OCI-LY7 (cell line): ENCODE measurements at regions of chr1 and their contacts with region 1.

Region 1: GRCh38 chr1:33295450-33296081 is 25.3 kb downstream of the A3GALT2 start:
- DNase-seq: peak; percentile 77
- H3K4me3 ChIP-seq: no peak overlapping the region
- H3K27ac ChIP-seq: no peak overlapping the region
- H3K4me1 ChIP-seq: no peaks in the 10 kb centered on the region
- CTCF ChIP-seq: peak; percentile 92

Region 2: GRCh38 chr1:33111970-33112369 is 183.6 kb before region 1 on chr1:
- CTCF ChIA-PET with region 1: no interaction called
- POLR2A ChIA-PET with region 1: no interaction called
- intact Hi-C with region 1: loop called (anchors 5 kb)
- DNase-seq: peak; percentile 43
- H3K4me3 ChIP-seq: no peak overlapping the region
- H3K27ac ChIP-seq: no peak overlapping the region
- H3K4me1 ChIP-seq: no peaks in the 10 kb centered on the region
- CTCF ChIP-seq: peak; percentile 75

Region 3: DNA sequence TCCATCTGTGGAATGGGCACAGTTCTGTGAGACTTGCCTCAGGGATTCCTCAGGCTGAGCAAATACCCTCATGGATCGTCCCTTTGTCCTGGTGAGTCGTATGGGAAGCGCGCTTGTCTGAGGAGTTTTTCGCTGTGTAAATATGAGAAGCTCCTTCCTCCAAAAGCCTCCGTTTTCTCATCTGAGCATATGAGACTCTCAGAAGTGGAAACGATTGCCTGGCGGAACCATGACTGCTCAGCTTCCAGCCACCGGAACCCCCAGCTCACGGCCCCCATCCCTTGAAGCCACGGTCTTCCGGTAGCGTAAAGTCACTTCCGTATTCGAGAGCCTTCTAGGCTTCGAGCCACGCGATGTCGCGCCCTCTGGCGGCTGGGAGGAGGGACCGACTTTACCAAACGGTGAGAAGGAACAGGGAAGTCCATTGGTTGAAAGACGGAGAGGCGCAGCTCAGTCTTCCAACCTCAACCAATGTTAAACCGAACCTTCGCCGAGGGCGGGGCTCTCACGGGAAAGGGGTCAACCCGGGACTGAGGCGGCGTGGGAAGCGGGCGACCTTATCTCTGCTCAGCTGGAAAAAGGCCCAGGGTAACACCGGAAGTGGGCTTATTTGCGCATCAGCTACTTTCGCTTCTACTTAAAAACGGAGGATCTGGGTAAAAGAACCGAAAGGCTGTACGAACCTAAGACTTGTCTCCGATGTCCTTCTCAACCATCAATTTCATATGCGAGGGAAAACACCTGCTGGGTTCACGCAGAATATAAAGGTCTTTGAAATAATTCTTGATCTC is 168.4 kb before region 1 on chr1:
- CTCF ChIA-PET with region 1: no interaction called
- POLR2A ChIA-PET with region 1: no interaction called
- intact Hi-C with region 1: loop called (anchors 5 kb)
- DNase-seq: peak; percentile 98
- H3K4me3 ChIP-seq: peak overlapping the region; percentile 76
- H3K27ac ChIP-seq: peak overlapping the region; percentile 90
- H3K4me1 ChIP-seq: peaks cover 24% of the 10 kb centered on the region
- CTCF ChIP-seq: peak; percentile 96

Region 4: DNA sequence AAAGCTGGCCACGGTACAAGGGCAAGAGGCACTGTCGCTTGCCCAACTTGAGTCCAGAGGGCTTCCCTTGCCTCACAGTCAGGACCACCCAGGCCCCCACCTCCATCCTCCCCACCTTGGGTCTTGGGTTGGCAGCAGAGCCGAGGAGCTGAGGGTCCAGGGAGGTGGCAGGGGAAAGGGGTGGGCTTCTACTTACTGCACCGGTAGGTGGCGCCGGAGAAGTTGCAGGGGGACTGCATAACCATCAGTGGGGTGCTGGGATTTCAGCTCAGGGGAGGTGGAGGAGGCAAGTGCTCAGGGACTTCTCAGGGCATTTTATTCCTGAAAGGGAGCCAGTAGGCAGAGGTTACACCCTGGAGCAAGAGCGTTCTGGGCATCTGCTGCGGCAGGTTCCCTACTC is 157.8 kb before region 1 on chr1:
- CTCF ChIA-PET with region 1: interaction called, 4 read pairs
- POLR2A ChIA-PET with region 1: no interaction called
- intact Hi-C with region 1: loop called (anchors 1 kb)
- DNase-seq: peak; percentile 65
- H3K4me3 ChIP-seq: no peak overlapping the region
- H3K27ac ChIP-seq: no peak overlapping the region
- H3K4me1 ChIP-seq: no peaks in the 10 kb centered on the region
- CTCF ChIP-seq: peak; percentile 86

Region 5: DNA sequence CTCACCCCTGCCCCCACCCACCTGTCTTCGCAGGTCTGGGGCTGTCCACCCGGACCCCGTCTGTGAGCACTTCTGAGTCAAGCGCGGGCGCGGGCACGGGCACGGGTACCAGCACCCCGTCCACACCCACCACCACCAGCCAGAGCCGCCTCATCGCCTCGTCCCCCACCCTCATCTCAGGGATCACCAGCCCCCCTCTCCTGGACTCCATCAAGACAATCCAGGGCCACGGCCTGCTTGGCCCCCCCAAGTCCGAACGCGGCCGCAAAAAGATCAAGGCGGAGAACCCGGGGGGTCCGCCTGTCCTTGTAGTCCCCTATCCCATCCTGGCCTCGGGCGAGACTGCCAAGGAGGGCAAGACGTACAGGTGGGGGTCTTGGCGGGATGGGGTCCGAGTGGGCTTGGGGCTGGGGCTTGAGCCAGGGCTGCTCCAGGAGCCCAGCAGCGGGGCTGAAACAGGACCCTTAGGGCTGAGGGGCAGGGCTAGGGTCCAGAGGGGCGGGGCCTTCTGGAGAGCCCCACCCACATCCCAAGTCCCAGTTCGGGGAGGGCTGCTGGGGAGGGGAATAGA is 15.4 kb before region 1 on chr1:
- CTCF ChIA-PET with region 1: no interaction called
- POLR2A ChIA-PET with region 1: no interaction called
- intact Hi-C with region 1: no loop called
- DNase-seq: no peak
- H3K4me3 ChIP-seq: no peak overlapping the region
- H3K27ac ChIP-seq: no peak overlapping the region
- H3K4me1 ChIP-seq: no peaks in the 10 kb centered on the region
- CTCF ChIP-seq: no peak

Region 6: DNA sequence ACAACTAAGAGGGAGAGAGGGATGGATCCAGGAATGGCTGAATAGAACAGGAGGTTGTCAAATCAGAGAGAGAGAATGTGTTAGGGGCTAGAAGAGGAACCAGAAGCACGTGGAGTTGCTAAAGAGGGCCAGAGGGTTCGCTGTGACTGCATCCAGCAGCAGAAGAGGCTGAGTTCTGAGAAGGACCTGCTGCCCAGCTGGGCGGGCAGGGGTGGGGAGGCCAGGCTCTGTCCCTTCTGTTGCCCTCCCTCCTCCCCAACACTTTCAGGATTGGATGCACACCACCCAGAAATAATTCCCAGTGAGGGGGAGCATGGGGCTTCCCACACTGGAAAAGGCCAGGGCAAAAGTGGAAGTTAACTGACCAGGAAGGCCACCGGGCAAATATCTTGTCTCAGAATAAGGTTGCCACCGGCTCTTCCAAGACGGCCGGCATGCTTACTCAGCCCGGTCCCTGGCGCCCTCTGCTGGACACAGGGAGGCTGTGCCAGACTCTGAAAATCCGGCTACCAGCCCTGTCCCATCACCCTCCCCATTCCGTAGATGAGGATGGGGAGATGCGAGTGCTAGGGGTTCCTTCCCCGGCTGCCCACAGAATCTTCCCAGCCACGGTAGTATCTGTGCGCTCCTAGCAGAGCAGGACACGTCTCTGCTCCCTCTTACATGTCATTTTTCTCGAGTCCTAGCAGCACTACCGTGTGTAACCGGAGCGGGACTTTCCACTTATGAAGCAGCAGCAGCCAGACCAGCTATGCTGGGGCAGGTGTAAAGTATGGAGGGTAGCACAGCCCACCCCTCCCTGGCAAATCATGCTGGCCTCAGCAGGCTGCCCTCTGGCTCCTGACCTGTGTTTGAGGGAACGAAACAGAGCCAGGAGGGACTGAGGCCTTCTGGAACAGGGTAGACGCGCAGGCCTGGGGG is 72.2 kb after region 1 on chr1:
- CTCF ChIA-PET with region 1: interaction called, 3 read pairs
- POLR2A ChIA-PET with region 1: no interaction called
- intact Hi-C with region 1: loop called (anchors 1 kb)
- DNase-seq: peak; percentile 81
- H3K4me3 ChIP-seq: no peak overlapping the region
- H3K27ac ChIP-seq: no peak overlapping the region
- H3K4me1 ChIP-seq: no peaks in the 10 kb centered on the region
- CTCF ChIP-seq: peak; percentile 92

Region 7: GRCh38 chr1:33472349-33472980 is 176.9 kb after region 1 on chr1 and contains the start of gene ZSCAN20:
- CTCF ChIA-PET with region 1: interaction called, 5 read pairs
- POLR2A ChIA-PET with region 1: interaction called, 4 read pairs
- intact Hi-C with region 1: loop called (anchors 1 kb)
- DNase-seq: peak; percentile 90
- H3K4me3 ChIP-seq: peak within 1 kb of the TSS; percentile 74
- H3K27ac ChIP-seq: no peak within 1 kb of the TSS
- H3K4me1 ChIP-seq: peaks cover 18% of the 10 kb centered on the region
- CTCF ChIP-seq: no peak
- total RNA-seq, gene ZSCAN20: 3.0 and 4.0 TPM in 2 replicates

Region 8: GRCh38 chr1:33616773-33617172 is 321.2 kb after region 1 on chr1:
- CTCF ChIA-PET with region 1: no interaction called
- POLR2A ChIA-PET with region 1: no interaction called
- intact Hi-C with region 1: loop called (anchors 10 kb)
- DNase-seq: no peak
- H3K4me3 ChIP-seq: no peak overlapping the region
- H3K27ac ChIP-seq: no peak overlapping the region
- H3K4me1 ChIP-seq: no peaks in the 10 kb centered on the region
- CTCF ChIP-seq: no peak

Region 9: DNA sequence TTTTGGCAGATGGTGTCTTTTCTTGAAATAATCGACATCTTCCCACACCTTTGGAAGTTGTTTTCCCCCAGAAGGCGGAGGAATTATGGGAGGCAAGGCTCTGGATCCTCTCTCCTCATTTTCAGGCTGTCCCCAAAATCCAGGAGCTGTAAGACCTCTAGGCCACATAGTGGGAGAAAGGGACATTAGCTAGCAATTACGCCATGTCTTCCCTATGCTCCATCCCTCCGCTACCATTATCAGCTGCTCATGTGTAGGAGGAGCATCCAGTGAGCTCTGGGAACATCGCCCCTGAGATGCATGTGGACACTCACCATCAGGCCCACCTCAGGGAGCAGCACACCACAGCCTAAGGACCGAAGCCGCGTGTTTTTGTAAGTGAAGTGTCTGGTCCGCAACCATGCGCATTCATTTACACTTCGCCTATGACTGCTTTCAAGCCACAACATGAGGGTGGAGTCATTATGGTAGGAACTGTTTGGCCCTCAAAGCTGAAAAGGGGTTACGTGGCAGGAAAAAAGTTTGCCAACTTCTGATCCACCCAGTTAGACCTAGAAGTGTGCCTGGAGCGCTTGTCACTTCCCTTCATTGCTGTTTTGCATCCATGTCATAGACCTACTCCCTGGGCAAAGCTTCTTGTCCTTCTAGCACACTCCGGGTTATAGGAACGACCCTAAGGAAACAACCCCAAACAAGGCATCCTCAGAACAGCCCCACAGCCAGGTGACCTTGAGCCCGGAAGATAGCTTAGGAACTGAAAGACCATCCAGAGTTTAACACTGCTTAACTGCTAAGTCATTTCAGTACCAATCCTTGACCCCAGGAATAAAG is 966.7 kb after region 1 on chr1:
- CTCF ChIA-PET with region 1: no interaction called
- POLR2A ChIA-PET with region 1: no interaction called
- intact Hi-C with region 1: no loop called
- DNase-seq: no peak
- H3K4me3 ChIP-seq: no peak overlapping the region
- H3K27ac ChIP-seq: no peak overlapping the region
- H3K4me1 ChIP-seq: no peaks in the 10 kb centered on the region
- CTCF ChIP-seq: no peak